ENCODE measurements at regions of chr6 and their contacts with region 1.

Region 1: GRCh38 chr6:3281631-3282475 is 23.1 kb downstream of the PSMG4 start:
- DNase-seq: peak in 1 of 14 experiments; percentile 21
- ATAC-seq: no peak
- H3K4me3 ChIP-seq: no peak overlapping the region
- H3K4me3 Mint-ChIP-seq: no peak overlapping the region
- H3K27ac ChIP-seq: no peak overlapping the region
- H3K27ac Mint-ChIP-seq: no peak overlapping the region
- H3K4me1 ChIP-seq: no peaks in the 10 kb centered on the region
- H3K4me1 Mint-ChIP-seq: peaks cover 5% of the 10 kb centered on the region
- H3K27me3 ChIP-seq: no peaks in the 10 kb centered on the region
- H3K27me3 Mint-ChIP-seq: no peaks in the 10 kb centered on the region
- CTCF ChIP-seq: no peak

Region 2: GRCh38 chr6:3410385-3411360 is 128.8 kb after region 1 on chr6:
- CTCF ChIA-PET with region 1: no interaction called
- POLR2A ChIA-PET with region 1: no interaction called
- intact Hi-C with region 1: loop called in 1 of 2 experiments (anchors 2 kb)
- DNase-seq: peak; percentile 37 to 83 (median 56)
- ATAC-seq: peak; percentile 50
- H3K4me3 ChIP-seq: no peak overlapping the region
- H3K4me3 Mint-ChIP-seq: no peak overlapping the region
- H3K27ac ChIP-seq: no peak overlapping the region
- H3K27ac Mint-ChIP-seq: no peak overlapping the region
- H3K4me1 ChIP-seq: peaks cover 11% of the 10 kb centered on the region
- H3K4me1 Mint-ChIP-seq: peaks cover 22% of the 10 kb centered on the region
- H3K27me3 ChIP-seq: no peaks in the 10 kb centered on the region
- H3K27me3 Mint-ChIP-seq: no peaks in the 10 kb centered on the region
- CTCF ChIP-seq: peak; percentile 75

Region 3: GRCh38 chr6:3510178-3510976 is 228.5 kb after region 1 on chr6:
- CTCF ChIA-PET with region 1: interaction called, 4 read pairs
- POLR2A ChIA-PET with region 1: no interaction called
- intact Hi-C with region 1: loop called in 1 of 2 experiments (anchors 5 kb)
- DNase-seq: no peak
- ATAC-seq: no peak
- H3K4me3 ChIP-seq: no peak overlapping the region
- H3K4me3 Mint-ChIP-seq: no peak overlapping the region
- H3K27ac ChIP-seq: no peak overlapping the region
- H3K27ac Mint-ChIP-seq: no peak overlapping the region
- H3K4me1 ChIP-seq: no peaks in the 10 kb centered on the region
- H3K4me1 Mint-ChIP-seq: no peaks in the 10 kb centered on the region
- H3K27me3 ChIP-seq: peaks cover 7% of the 10 kb centered on the region in 2 experiments
- H3K27me3 Mint-ChIP-seq: peaks cover 46% of the 10 kb centered on the region
- CTCF ChIP-seq: no peak

Region 4: DNA sequence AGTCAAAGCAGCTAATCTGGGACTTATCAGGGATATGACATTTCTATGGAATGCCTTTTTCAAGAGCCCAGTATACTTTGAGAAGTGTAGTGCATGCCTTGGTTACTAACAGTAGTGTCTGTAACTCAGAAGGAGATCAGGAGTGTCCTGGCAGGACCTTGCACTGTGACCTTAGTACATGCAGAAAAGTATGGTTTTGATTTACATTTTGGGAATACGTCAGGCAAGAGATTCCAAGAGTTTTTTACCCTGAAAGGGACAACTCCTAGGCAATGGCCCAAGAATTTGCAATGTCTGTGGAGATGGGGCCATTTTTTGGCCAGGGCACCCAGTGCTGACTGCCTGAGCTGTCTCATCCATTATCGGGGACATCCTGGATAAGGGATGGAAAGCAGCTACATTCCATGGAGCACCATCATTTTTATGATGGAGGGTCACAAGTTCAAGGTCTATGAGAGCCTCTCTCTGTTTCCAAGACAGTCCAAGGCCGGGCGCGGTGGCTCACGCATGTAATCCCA is 647.5 kb after region 1 on chr6:
- CTCF ChIA-PET with region 1: interaction called, 3 read pairs
- POLR2A ChIA-PET with region 1: no interaction called
- intact Hi-C with region 1: loop called in 1 of 2 experiments (anchors 5 kb)
- DNase-seq: no peak
- ATAC-seq: no peak
- H3K4me3 ChIP-seq: no peak overlapping the region
- H3K4me3 Mint-ChIP-seq: no peak overlapping the region
- H3K27ac ChIP-seq: no peak overlapping the region
- H3K27ac Mint-ChIP-seq: no peak overlapping the region
- H3K4me1 ChIP-seq: peaks cover 4% of the 10 kb centered on the region
- H3K4me1 Mint-ChIP-seq: no peaks in the 10 kb centered on the region
- H3K27me3 ChIP-seq: no peaks in the 10 kb centered on the region
- H3K27me3 Mint-ChIP-seq: peaks cover 5% of the 10 kb centered on the region
- CTCF ChIP-seq: no peak

Region 5: DNA sequence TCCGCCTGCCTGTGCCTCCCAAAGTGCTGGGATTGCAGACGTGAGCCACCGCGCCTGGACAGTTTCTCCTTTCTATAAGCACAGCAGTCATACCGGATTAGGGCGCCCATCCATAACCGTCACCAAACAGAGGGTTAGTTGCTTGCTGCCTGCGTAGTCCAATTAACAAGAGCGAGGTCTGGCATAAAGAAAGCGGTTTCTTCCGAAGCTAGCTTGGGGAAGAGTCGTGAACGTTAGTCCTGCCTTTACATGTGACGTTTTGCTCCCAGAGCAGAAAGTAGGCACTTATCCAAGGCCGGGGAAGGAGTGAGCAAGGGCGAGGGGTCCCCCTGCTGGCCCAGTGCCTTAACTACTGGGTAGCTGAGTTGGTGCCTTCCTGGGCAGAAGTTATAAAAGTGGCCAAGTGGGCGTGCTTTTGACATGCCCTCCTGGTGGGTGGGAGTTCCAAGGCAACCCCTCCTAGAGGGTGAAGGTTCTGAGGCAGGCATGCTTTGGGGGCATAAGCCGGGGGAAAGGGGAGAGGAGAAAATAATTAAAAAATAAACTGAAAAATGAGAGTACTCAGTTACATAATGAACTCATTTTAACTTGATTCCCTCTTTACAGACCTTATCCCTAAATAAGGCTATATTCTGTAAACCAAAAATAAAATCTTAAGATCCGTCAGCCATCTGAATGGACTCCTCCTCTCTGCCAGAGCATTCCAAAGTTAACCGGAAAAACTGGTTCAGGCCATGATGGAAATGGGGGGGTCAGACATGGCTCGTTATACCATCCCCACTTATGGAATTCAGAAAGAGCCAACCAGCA is 709.0 kb after region 1 on chr6:
- CTCF ChIA-PET with region 1: no interaction called
- POLR2A ChIA-PET with region 1: no interaction called
- intact Hi-C with region 1: loop called in 1 of 2 experiments (anchors 5 kb)
- DNase-seq: peak; percentile 55 to 82 (median 62)
- ATAC-seq: peak; percentile 93
- H3K4me3 ChIP-seq: no peak overlapping the region
- H3K4me3 Mint-ChIP-seq: no peak overlapping the region
- H3K27ac ChIP-seq: no peak overlapping the region
- H3K27ac Mint-ChIP-seq: no peak overlapping the region
- H3K4me1 ChIP-seq: peaks cover 7% of the 10 kb centered on the region
- H3K4me1 Mint-ChIP-seq: peaks cover 24% of the 10 kb centered on the region
- H3K27me3 ChIP-seq: no peaks in the 10 kb centered on the region
- H3K27me3 Mint-ChIP-seq: no peaks in the 10 kb centered on the region
- CTCF ChIP-seq: peak; percentile 83

Region 6: DNA sequence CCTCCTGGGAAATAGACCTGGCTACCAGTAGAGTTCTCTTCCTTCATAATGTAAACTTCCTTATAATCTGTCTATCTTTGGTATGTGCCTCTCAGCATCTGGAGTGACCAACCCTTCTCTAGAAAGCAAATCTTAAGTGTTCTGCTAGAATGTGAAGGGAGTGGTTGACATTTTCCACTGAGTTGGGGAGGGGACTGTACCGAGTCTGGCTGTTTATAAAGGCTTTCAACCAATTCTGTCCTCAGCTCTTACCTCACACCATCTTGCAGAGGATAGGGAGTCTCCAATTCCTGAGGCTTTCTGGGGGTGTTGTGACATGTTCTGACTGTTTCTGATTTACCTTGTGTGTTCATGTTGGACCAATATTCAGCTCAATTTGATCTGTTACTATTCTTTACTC is 757.5 kb after region 1 on chr6:
- CTCF ChIA-PET with region 1: no interaction called
- POLR2A ChIA-PET with region 1: no interaction called
- intact Hi-C with region 1: no loop called
- DNase-seq: no peak
- ATAC-seq: no peak
- H3K4me3 ChIP-seq: no peak overlapping the region
- H3K4me3 Mint-ChIP-seq: no peak overlapping the region
- H3K27ac ChIP-seq: no peak overlapping the region
- H3K27ac Mint-ChIP-seq: no peak overlapping the region
- H3K4me1 ChIP-seq: peaks cover 9% of the 10 kb centered on the region
- H3K4me1 Mint-ChIP-seq: peaks cover 48% of the 10 kb centered on the region
- H3K27me3 ChIP-seq: no peaks in the 10 kb centered on the region
- H3K27me3 Mint-ChIP-seq: no peaks in the 10 kb centered on the region
- CTCF ChIP-seq: no peak